Sigmoid colon (tissue), 7 donors: ENCODE measurements at regions of chr13 and their contacts with region 1.

Region 1: GRCh38 chr13:108218044-108218974 is at the start of gene ABHD13:
- DNase-seq: peak; percentile 94
- H3K4me3 ChIP-seq: peak within 1 kb of the TSS; percentile 86 to 100 (median 92)
- H3K27ac ChIP-seq: peak within 1 kb of the TSS; percentile 87 to 94 (median 90)
- H3K4me1 ChIP-seq: peaks cover 0 to 70% (median 50%) of the 10 kb centered on the region in 4 donors
- H3K27me3 ChIP-seq: no peaks in the 10 kb centered on the region
- CTCF ChIP-seq: no peak
- EP300 ChIP-seq: peak in 2 of 4 donors; percentile 43 to 50
- POLR2A ChIP-seq: peak; percentile 44 to 64
- total RNA-seq, gene ABHD13: 13.0 to 15.7 (median 14.2) TPM

Region 2: GRCh38 chr13:108915634-108916512 is 697.6 kb after region 1 on chr13:
- intact Hi-C with region 1: loop called (anchors 5 kb)
- DNase-seq: peak; percentile 98
- H3K4me3 ChIP-seq: peak overlapping the region in 3 of 4 donors; percentile 20 to 34 (median 25)
- H3K27ac ChIP-seq: peak overlapping the region; percentile 73 to 87 (median 80)
- H3K4me1 ChIP-seq: peaks cover 0 to 39% (median 25%) of the 10 kb centered on the region in 4 donors
- H3K27me3 ChIP-seq: no peaks in the 10 kb centered on the region
- CTCF ChIP-seq: no peak
- EP300 ChIP-seq: peak in 3 of 4 donors; percentile 77 to 98 (median 82)
- POLR2A ChIP-seq: no peak